Natural killer cell (primary cell): ENCODE measurements at regions of chr3 and their contacts with region 1.

Region 1: GRCh38 chr3:18389108-18389733 is 35.9 kb downstream of the SATB1 start:
- DNase-seq: peak in 1 of 2 donors; percentile 73
- ATAC-seq: peak in 1 of 3 donors; percentile 21
- H3K4me3 ChIP-seq: no peak overlapping the region
- H3K4me3 Mint-ChIP-seq: no peak overlapping the region
- H3K27ac ChIP-seq: no peak overlapping the region
- H3K27ac Mint-ChIP-seq: peak overlapping the region; percentile 24 to 60
- H3K4me1 ChIP-seq: no peaks in the 10 kb centered on the region
- H3K4me1 Mint-ChIP-seq: peaks cover 17 to 19% of the 10 kb centered on the region in 2 donors
- H3K27me3 ChIP-seq: no peaks in the 10 kb centered on the region
- H3K27me3 Mint-ChIP-seq: no peaks in the 10 kb centered on the region
- CTCF ChIP-seq: peak; percentile 85

Region 2: DNA sequence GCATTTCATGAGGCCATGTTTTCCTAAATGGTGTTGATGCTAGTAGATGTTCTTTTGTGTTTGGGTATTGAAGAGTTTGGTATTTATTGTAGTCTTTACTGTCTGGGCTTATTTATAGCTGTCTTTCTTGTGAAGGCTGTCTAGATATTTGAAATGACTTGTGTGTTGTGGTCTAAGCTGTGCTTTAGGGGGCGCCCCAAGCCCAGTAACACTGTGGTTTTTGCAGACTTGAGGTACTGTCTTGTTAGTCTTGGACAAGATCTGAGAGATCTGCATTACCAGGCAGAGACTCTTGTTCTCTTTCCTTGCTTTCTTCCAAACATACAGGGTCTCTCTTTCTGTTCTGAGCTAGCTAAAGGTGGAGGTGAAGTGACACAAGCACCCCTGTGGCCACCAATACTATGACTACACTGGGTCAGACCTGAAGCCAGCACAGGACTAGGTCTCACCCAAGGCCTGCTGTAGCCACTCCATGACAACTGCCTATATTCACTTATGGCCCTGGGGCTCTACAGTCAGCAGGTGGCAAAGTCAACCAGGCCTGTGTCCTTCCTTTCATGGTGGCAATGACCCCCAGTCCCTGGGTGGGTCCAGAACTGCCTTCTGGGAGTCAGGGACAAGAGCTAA is 494.7 kb before region 1 on chr3:
- intact Hi-C with region 1: loop called (anchors 2 kb)
- DNase-seq: peak; percentile 22 to 47
- ATAC-seq: peak; percentile 55 to 79 (median 63)
- H3K4me3 ChIP-seq: no peak overlapping the region
- H3K4me3 Mint-ChIP-seq: no peak overlapping the region
- H3K27ac ChIP-seq: no peak overlapping the region
- H3K27ac Mint-ChIP-seq: no peak overlapping the region
- H3K4me1 ChIP-seq: no peaks in the 10 kb centered on the region
- H3K4me1 Mint-ChIP-seq: no peaks in the 10 kb centered on the region
- H3K27me3 ChIP-seq: no peaks in the 10 kb centered on the region
- H3K27me3 Mint-ChIP-seq: peaks cover 0 to 5% of the 10 kb centered on the region in 2 donors
- CTCF ChIP-seq: peak; percentile 20

Region 3: GRCh38 chr3:18217507-18218174 is 171.6 kb before region 1 on chr3:
- intact Hi-C with region 1: loop called (anchors 10 kb)
- DNase-seq: no peak
- ATAC-seq: no peak
- H3K4me3 ChIP-seq: no peak overlapping the region
- H3K4me3 Mint-ChIP-seq: no peak overlapping the region
- H3K27ac ChIP-seq: no peak overlapping the region
- H3K27ac Mint-ChIP-seq: no peak overlapping the region
- H3K4me1 ChIP-seq: no peaks in the 10 kb centered on the region
- H3K4me1 Mint-ChIP-seq: peaks cover 4 to 6% of the 10 kb centered on the region in 2 donors
- H3K27me3 ChIP-seq: no peaks in the 10 kb centered on the region
- H3K27me3 Mint-ChIP-seq: no peaks in the 10 kb centered on the region
- CTCF ChIP-seq: no peak